GM12878 (cell line): ENCODE measurements at regions of chr17 and their contacts with region 1.

Region 1: GRCh38 chr17:27236717-27237315 is 57.1 kb upstream of the WSB1 start:
- DNase-seq: no peak
- ATAC-seq: peak; percentile 50
- H3K4me3 ChIP-seq: no peak overlapping the region
- H3K27ac ChIP-seq: no peak overlapping the region
- H3K4me1 ChIP-seq: peaks cover 28% of the 10 kb centered on the region
- H3K27me3 ChIP-seq: no peaks in the 10 kb centered on the region
- CTCF ChIP-seq: peak; percentile 81 to 88 (median 87)
- EP300 ChIP-seq: no peak
- POLR2A ChIP-seq: no peak
- RAD21 ChIP-seq: peak; percentile 94

Region 2: DNA sequence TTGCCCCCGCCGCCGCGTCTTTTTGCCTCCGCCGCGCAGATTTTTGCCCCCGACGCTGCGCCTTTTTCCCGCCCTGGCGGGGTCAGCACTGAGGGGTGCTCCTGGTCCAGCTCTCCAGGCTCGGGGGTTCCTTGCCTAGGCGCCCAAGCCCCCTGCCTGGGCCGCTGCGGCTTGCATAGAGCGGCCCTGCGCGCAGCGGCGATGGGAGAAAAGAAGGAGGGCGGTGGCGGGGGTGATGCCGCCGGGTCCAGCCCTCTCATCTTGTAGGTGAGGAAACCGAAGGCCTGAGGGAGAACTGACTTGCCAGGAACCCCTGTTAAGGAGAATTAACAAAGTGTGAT is 273.7 kb before region 1 on chr17:
- CTCF ChIA-PET with region 1: no interaction called
- POLR2A ChIA-PET with region 1: no interaction called
- RAD21 ChIA-PET with region 1: no interaction called
- SMC1A ChIA-PET with region 1: no interaction called
- in situ Hi-C with region 1: no loop called
- intact Hi-C with region 1: no loop called
- DNase-seq: no peak
- ATAC-seq: no peak
- H3K4me3 ChIP-seq: no peak overlapping the region
- H3K27ac ChIP-seq: no peak overlapping the region
- H3K4me1 ChIP-seq: no peaks in the 10 kb centered on the region
- H3K27me3 ChIP-seq: no peaks in the 10 kb centered on the region
- CTCF ChIP-seq: no peak
- EP300 ChIP-seq: no peak
- POLR2A ChIP-seq: no peak
- RAD21 ChIP-seq: no peak

Region 3: DNA sequence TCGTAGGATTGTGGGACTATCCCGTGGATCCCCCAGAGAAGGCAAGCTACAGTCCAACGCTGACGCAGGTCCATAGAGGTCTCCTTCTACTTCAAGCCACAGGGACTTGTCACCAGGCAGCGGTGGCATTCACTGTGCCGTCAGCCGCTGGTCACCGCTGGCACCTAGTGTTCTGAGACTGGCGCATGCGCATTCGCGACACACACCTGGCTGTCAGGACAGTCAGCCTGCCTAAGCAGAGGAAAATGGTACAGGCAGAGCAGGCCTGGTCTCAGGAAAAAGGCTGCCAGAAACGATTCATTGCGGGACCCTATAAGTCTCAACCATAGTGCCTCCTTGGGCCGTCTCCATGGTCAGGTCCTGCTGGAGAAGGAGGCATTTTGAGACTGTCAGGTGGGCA is 81.0 kb before region 1 on chr17:
- CTCF ChIA-PET with region 1: no interaction called
- POLR2A ChIA-PET with region 1: no interaction called
- RAD21 ChIA-PET with region 1: no interaction called
- SMC1A ChIA-PET with region 1: no interaction called
- in situ Hi-C with region 1: no loop called
- intact Hi-C with region 1: loop called (anchors 10 kb)
- DNase-seq: no peak
- ATAC-seq: no peak
- H3K4me3 ChIP-seq: no peak overlapping the region
- H3K27ac ChIP-seq: no peak overlapping the region
- H3K4me1 ChIP-seq: no peaks in the 10 kb centered on the region
- H3K27me3 ChIP-seq: no peaks in the 10 kb centered on the region
- CTCF ChIP-seq: no peak
- EP300 ChIP-seq: no peak
- POLR2A ChIP-seq: no peak
- RAD21 ChIP-seq: no peak

Region 4: DNA sequence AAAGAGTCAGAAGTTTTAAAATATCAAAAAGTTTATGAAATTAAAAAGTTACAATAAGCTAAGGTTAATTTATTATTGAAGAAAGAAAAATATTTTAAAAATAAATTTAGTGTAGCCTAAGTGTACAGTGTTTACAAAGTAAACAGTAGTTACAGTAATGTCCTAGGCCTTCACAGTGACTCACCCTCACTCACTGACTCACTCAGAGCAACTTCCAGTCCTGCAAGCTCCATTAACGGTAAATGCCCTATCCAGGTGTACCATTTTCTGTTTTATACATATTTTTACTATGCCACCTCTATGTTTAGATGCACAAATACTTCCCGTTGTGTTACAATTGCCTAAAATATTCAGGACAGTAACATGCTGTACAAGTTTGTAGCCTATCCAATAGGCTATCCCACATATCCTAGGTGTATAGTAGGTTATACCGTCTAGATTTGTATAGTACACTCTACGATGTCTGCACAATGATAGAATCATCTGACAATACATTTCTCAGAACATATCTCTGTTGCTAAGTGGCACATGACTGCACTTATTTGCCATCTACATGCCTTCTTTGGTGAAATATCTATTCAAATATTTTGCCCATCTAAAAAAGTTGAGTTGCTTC is 10.1 kb before region 1 on chr17:
- CTCF ChIA-PET with region 1: interaction called, 49 read pairs
- POLR2A ChIA-PET with region 1: interaction called, 6 read pairs
- RAD21 ChIA-PET with region 1: interaction called, 10 read pairs
- SMC1A ChIA-PET with region 1: interaction called, 137 read pairs
- in situ Hi-C with region 1: no loop called
- intact Hi-C with region 1: no loop called
- DNase-seq: no peak
- ATAC-seq: no peak
- H3K4me3 ChIP-seq: no peak overlapping the region
- H3K27ac ChIP-seq: no peak overlapping the region
- H3K4me1 ChIP-seq: no peaks in the 10 kb centered on the region
- H3K27me3 ChIP-seq: no peaks in the 10 kb centered on the region
- CTCF ChIP-seq: no peak
- EP300 ChIP-seq: no peak
- POLR2A ChIP-seq: no peak
- RAD21 ChIP-seq: no peak

Region 5: GRCh38 chr17:27306276-27306835 is 69.5 kb after region 1 on chr17:
- CTCF ChIA-PET with region 1: interaction called, 14 read pairs
- POLR2A ChIA-PET with region 1: no interaction called
- RAD21 ChIA-PET with region 1: interaction called, 7 read pairs
- SMC1A ChIA-PET with region 1: interaction called, 14 read pairs
- in situ Hi-C with region 1: no loop called
- intact Hi-C with region 1: no loop called
- DNase-seq: no peak
- ATAC-seq: no peak
- H3K4me3 ChIP-seq: no peak overlapping the region
- H3K27ac ChIP-seq: no peak overlapping the region
- H3K4me1 ChIP-seq: no peaks in the 10 kb centered on the region
- H3K27me3 ChIP-seq: no peaks in the 10 kb centered on the region
- CTCF ChIP-seq: no peak
- EP300 ChIP-seq: no peak
- POLR2A ChIP-seq: no peak
- RAD21 ChIP-seq: no peak

Region 6: DNA sequence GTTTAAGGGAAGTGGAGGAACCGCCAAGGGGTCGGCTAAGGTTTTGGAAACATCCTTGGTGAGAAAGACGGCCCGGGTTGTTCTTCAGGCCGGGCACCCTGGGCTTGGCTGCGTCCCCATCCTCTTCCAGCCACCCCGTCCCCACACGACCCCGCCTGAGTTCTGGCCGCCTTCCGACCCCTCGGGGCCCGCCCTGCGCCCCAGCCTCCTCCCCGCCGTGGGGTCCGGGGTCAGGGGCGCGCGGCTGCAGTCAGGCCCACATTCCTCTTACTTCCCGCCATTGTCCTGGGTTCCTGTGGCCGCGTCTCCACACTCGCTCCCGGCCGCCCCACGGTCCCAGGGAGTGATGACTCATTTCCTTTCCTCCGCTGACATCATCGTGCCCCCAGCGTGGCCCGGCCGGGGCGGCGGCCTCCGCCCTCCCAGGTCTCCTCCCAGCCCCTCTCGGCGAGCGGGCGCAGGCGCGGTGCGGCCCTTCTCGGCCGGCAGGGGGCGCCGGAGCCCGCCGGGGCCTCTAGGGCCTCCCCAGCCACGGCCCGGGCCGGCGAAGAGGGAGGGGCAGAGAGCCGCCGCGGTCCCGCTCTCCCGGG is 116.7 kb after region 1 on chr17:
- CTCF ChIA-PET with region 1: interaction called, 106 read pairs
- POLR2A ChIA-PET with region 1: no interaction called
- RAD21 ChIA-PET with region 1: interaction called, 33 read pairs
- SMC1A ChIA-PET with region 1: interaction called, 22 read pairs
- in situ Hi-C with region 1: no loop called
- intact Hi-C with region 1: loop called (anchors 2 kb)
- DNase-seq: peak; percentile 42
- ATAC-seq: peak; percentile 94
- H3K4me3 ChIP-seq: peak overlapping the region; percentile 73
- H3K27ac ChIP-seq: peak overlapping the region; percentile 70
- H3K4me1 ChIP-seq: peaks cover 7% of the 10 kb centered on the region
- H3K27me3 ChIP-seq: no peaks in the 10 kb centered on the region
- CTCF ChIP-seq: peak; percentile 63 to 93 (median 89); a peak in 4 of 6 replicates
- EP300 ChIP-seq: peak in 1 of 2 experiments; percentile 39; a peak in 2 of 4 replicates
- POLR2A ChIP-seq: peak; percentile 85
- RAD21 ChIP-seq: peak; percentile 73

Region 7: GRCh38 chr17:27609611-27610303 is 372.9 kb after region 1 on chr17:
- CTCF ChIA-PET with region 1: interaction called, 129 read pairs
- POLR2A ChIA-PET with region 1: no interaction called
- RAD21 ChIA-PET with region 1: no interaction called
- SMC1A ChIA-PET with region 1: interaction called, 3 read pairs
- in situ Hi-C with region 1: loop called (anchors 5 kb)
- intact Hi-C with region 1: no loop called
- DNase-seq: no peak
- ATAC-seq: peak; percentile 37; the same call in 2 of the 3 replicates
- H3K4me3 ChIP-seq: no peak overlapping the region
- H3K27ac ChIP-seq: no peak overlapping the region
- H3K4me1 ChIP-seq: no peaks in the 10 kb centered on the region
- H3K27me3 ChIP-seq: no peaks in the 10 kb centered on the region
- CTCF ChIP-seq: peak; percentile 43 to 52 (median 47)
- EP300 ChIP-seq: no peak
- POLR2A ChIP-seq: no peak
- RAD21 ChIP-seq: peak; percentile 70